Lower lobe of right lung (tissue), 2 donors: ENCODE measurements at regions of chr5 and their contacts with region 1.

Region 1: GRCh38 chr5:72363166-72363802 is 43.1 kb downstream of the PTCD2 start:
- DNase-seq: no peak
- ATAC-seq: no peak
- H3K4me3 ChIP-seq: no peak overlapping the region
- H3K27ac ChIP-seq: no peak overlapping the region
- H3K4me1 ChIP-seq: peaks cover 14% of the 10 kb centered on the region
- H3K27me3 ChIP-seq: no peaks in the 10 kb centered on the region
- CTCF ChIP-seq: no peak

Region 2: GRCh38 chr5:72167804-72168203 is 195.5 kb before region 1 on chr5:
- intact Hi-C with region 1: no loop called
- DNase-seq: no peak
- ATAC-seq: no peak
- H3K4me3 ChIP-seq: no peak overlapping the region
- H3K27ac ChIP-seq: no peak overlapping the region
- H3K4me1 ChIP-seq: peaks cover 10% of the 10 kb centered on the region
- H3K27me3 ChIP-seq: no peaks in the 10 kb centered on the region
- CTCF ChIP-seq: no peak

Region 3: GRCh38 chr5:72525833-72526232 is 162.5 kb after region 1 on chr5:
- intact Hi-C with region 1: loop called (anchors 5 kb)
- DNase-seq: no peak
- ATAC-seq: peak; percentile 59 to 64
- H3K4me3 ChIP-seq: no peak overlapping the region
- H3K27ac ChIP-seq: no peak overlapping the region
- H3K4me1 ChIP-seq: no peaks in the 10 kb centered on the region
- H3K27me3 ChIP-seq: no peaks in the 10 kb centered on the region
- CTCF ChIP-seq: no peak